ENCODE measurements at regions of chr14 and their contacts with region 1.

Region 1: DNA sequence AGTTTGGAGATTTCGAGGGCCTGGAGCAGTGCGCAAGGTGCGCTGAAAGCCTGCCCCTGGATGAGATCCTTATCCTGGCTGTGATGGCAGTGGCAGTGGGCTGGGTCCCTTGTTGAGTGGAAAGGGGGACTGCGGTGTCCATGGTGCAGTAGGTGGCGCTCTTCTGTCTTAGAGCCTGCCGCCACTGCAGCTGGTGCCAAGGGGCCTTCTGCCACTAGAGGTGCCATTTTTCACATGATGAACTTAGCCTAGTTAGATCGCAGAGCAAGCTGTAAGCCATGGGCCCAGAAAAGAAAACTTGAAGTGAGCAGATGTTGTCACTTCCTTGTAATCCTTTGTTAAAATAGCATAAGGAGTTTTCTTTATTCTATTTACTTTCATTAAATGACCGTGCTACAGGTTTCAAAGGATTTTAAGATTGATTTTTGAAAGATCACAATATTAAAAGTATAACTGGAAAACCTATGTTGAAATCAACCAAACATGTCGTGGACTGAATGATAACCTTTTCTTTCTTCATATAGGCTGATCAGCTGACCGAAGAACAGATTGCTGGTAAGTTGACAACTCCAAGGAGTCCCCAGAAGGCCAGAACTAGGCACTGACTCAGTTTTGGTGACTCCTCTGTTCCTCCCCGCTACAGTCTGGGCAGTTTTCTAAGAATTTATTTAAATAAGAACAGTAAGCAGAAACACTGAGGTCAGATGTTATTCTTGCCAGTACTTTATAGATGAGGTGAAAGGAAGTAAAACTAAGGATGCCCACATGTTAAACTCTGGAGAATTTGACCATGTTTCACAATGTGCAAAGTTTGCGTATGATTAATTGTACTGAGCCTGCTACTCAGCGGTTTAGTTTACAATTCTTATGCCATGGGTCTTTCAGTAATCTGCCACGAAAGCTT is 3.0 kb downstream of the CALM1 start:
- DNase-seq: peak; percentile 92
- H3K4me3 Mint-ChIP-seq: peak overlapping the region; percentile 83
- H3K27ac Mint-ChIP-seq: peak overlapping the region; percentile 99
- H3K4me1 Mint-ChIP-seq: peaks cover 52% of the 10 kb centered on the region
- H3K27me3 Mint-ChIP-seq: no peaks in the 10 kb centered on the region

Region 2: DNA sequence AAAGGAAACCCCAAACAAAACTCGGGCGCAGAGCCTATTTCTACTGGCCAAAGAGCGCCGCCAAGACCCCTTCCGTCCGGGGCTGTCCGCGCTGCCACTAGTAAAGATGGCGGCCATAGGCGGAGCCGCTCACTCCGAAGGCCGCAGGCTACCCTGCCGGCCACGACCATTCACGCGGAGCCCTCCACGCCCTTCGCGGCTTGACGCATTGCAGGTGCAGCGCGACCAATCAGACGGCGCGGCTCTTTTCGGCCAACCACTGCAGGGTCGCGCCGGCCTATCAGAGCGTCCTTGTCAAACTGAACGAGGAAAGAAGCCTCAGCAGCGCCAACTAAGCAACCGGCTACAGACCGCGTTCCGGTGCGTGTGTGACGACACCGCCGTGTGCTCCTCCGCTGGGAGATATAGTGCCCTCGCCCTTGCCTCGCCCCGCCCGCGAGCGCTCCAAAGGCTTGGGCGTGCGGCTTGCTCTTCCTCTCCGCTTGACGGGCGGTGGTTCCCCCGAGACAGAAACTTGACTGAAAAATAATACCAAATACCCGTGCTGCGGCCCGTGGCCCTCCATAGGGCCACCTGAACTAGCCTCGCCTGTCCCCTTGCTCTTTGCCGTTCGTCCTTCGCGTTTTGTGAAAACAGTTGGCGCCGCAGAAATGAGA is 16.6 kb before region 1 on chr14:
- CTCF ChIA-PET with region 1: interaction called, 26 read pairs
- POLR2A ChIA-PET with region 1: interaction called, 11 read pairs
- DNase-seq: peak; percentile 99
- H3K4me3 Mint-ChIP-seq: no peak overlapping the region
- H3K27ac Mint-ChIP-seq: no peak overlapping the region
- H3K4me1 Mint-ChIP-seq: peaks cover 24% of the 10 kb centered on the region
- H3K27me3 Mint-ChIP-seq: no peaks in the 10 kb centered on the region

Region 3: DNA sequence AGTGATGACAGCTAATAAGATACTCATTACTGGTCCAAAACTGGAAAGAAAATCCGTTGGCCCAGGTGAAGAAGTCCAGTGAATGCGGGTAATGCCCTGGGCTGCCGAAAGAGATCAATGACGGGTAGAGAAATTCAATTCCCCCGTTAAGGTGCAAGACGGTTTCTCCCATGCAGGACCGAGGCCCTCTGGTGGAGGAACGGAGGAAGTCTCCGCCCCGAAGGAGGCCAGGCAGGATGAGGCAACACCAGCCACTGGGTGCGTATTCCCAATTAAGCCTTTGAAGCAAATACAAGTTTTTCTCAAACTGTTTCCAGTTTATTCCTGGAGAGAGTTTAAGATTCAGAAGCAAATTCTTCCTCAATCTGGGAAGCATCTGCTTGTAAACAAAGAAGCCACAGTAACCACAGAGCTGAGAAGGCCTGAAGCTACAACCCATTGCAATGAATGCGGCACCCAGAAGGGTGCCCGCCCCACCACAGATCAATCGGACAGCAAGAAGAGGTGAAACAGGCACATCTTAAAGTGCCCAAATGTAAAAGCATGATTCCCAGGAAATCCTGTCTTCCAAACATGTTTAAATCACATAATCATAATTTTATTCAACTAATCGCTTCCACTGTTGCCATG is 297.9 kb after region 1 on chr14:
- CTCF ChIA-PET with region 1: interaction called, 10 read pairs
- POLR2A ChIA-PET with region 1: no interaction called
- DNase-seq: peak; percentile 81
- H3K4me3 Mint-ChIP-seq: no peak overlapping the region
- H3K27ac Mint-ChIP-seq: no peak overlapping the region
- H3K4me1 Mint-ChIP-seq: peaks cover 5% of the 10 kb centered on the region
- H3K27me3 Mint-ChIP-seq: no peaks in the 10 kb centered on the region

Measured in activated CD4-positive, alpha-beta T cell treated with anti-CD3 and anti-CD28 coated beads, Interleukin-2, amount 10 ng/mL, durations not matched to agents 7 days and 5 days (primary cell).